Activated CD4-positive, alpha-beta memory T cell treated with anti-CD3 and anti-CD28 coated beads, Interleukin-2, amount 10 ng/mL, durations not matched to agents 7 days and 5 days (primary cell): ENCODE measurements at regions of chr3 and their contacts with region 1.

Region 1: GRCh38 chr3:184371570-184372018 is 6.4 kb downstream of the THPO start:
- DNase-seq: peak; percentile 73
- H3K4me3 Mint-ChIP-seq: no peak overlapping the region
- H3K27ac Mint-ChIP-seq: no peak overlapping the region
- H3K4me1 Mint-ChIP-seq: peaks cover 6% of the 10 kb centered on the region
- H3K27me3 Mint-ChIP-seq: peaks cover 18% of the 10 kb centered on the region

Region 2: DNA sequence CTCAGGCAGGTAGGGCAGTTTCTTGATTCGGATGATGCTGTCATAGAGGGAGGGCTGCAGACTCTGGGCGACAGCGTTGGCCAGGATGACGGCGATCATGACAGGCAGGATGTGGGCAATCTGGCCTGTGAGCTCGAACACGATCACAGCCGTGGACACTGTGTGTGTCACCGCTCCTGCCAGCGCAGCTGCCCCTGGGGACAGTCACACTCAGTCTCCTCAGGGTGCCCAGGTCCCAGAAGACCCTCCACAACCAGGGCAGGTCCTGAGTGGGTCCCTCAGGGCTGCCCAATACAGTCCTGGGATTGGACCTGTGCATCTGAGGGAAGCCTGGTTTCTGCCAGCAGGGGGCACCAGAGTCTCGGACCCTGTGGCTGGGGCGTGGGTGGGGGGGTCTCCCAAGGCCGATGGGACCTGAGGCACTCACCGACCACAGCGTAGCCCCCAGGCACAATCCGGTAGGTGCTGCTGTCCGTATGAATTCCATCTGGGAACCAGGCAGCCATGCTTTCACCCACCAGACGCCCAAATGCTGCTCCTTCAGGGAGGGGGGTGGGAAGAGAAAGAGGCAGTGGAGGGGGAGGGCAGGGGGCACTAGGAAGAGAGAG is 17.4 kb before region 1 on chr3:
- CTCF ChIA-PET with region 1: interaction called, 19 read pairs
- POLR2A ChIA-PET with region 1: no interaction called
- DNase-seq: peak; percentile 54
- H3K4me3 Mint-ChIP-seq: no peak overlapping the region
- H3K27ac Mint-ChIP-seq: no peak overlapping the region
- H3K4me1 Mint-ChIP-seq: peaks cover 5% of the 10 kb centered on the region
- H3K27me3 Mint-ChIP-seq: no peaks in the 10 kb centered on the region

Region 3: DNA sequence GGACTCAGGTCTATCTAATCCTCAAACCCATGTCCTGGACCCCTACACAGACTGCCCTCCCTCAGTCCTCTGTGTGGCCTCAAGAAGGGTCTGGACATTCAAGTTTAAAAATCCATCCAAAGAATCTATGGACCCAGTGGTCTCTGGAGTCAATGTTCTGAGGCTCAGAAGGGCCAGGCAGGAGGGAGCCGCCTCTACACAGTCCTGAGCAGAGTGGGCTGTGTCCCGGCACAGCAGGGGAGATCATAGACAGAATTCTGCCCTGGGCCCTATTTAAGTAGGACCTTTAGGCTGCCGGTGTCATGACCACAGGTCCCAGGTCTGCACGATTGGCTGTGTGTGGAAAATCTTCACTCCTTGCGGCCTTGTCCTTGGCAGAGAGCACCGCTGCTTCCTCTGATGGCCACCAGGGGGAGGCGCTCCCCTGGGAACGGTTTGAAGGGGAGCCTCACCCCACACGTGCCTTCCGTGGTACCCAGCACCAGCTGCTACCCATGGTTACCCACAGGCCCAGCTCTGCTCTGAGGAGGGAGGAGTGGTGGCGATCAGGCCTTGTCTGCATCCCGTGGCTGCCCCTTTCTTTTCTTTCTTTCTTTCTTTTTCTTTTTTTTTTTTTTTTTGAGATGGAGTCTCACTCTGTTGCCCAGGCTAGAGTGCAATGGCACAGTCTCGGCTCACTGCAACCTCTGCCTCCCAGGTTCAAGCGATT is 46.2 kb after region 1 on chr3:
- CTCF ChIA-PET with region 1: interaction called, 18 read pairs
- POLR2A ChIA-PET with region 1: no interaction called
- DNase-seq: peak; percentile 73
- H3K4me3 Mint-ChIP-seq: no peak overlapping the region
- H3K27ac Mint-ChIP-seq: no peak overlapping the region
- H3K4me1 Mint-ChIP-seq: peaks cover 2% of the 10 kb centered on the region
- H3K27me3 Mint-ChIP-seq: peaks cover 5% of the 10 kb centered on the region

Region 4: GRCh38 chr3:184469423-184469822 is 97.8 kb after region 1 on chr3:
- CTCF ChIA-PET with region 1: interaction called, 17 read pairs
- POLR2A ChIA-PET with region 1: no interaction called
- DNase-seq: peak; percentile 35
- H3K4me3 Mint-ChIP-seq: no peak overlapping the region
- H3K27ac Mint-ChIP-seq: no peak overlapping the region
- H3K4me1 Mint-ChIP-seq: peaks cover 10% of the 10 kb centered on the region
- H3K27me3 Mint-ChIP-seq: peaks cover 24% of the 10 kb centered on the region

Region 5: DNA sequence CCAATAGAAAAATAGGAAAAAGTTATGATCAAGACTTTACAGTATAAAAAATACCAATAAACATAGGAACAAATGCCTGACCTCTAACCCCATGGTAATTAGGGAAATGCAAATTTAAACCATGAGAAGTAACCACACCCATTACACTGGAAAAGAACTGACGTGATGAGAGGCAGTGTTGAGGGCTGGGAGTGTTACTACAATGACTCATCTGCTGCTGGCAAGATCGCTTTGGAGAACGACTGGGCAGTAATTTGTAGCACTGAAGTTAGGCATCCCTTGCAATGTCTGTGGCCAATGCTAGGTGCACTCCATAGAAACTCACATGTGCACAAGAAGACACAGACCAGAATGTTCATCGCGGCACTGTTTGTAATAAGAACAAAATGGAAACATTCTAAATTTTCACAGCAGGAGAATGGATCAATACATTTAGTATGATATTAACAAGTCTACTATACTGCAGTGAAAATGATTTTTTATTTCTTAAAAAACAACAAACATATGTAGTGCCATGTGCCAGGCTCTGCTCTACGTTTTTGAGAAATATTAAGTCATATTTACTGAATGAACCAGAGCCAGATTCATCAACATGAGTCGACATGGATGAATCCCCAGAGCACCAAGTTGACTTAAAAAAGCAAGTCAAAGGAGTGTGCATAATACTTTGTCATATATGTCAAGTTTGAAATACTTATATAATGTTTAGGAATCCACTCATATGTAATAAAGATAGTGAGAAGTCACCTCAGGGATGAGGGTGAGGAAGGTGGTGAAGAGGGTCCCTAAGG is 152.4 kb after region 1 on chr3:
- CTCF ChIA-PET with region 1: interaction called, 12 read pairs
- POLR2A ChIA-PET with region 1: no interaction called
- DNase-seq: peak; percentile 63
- H3K4me3 Mint-ChIP-seq: peak overlapping the region; percentile 47
- H3K27ac Mint-ChIP-seq: peak overlapping the region; percentile 81
- H3K4me1 Mint-ChIP-seq: peaks cover 26% of the 10 kb centered on the region
- H3K27me3 Mint-ChIP-seq: peaks cover 25% of the 10 kb centered on the region

Region 6: DNA sequence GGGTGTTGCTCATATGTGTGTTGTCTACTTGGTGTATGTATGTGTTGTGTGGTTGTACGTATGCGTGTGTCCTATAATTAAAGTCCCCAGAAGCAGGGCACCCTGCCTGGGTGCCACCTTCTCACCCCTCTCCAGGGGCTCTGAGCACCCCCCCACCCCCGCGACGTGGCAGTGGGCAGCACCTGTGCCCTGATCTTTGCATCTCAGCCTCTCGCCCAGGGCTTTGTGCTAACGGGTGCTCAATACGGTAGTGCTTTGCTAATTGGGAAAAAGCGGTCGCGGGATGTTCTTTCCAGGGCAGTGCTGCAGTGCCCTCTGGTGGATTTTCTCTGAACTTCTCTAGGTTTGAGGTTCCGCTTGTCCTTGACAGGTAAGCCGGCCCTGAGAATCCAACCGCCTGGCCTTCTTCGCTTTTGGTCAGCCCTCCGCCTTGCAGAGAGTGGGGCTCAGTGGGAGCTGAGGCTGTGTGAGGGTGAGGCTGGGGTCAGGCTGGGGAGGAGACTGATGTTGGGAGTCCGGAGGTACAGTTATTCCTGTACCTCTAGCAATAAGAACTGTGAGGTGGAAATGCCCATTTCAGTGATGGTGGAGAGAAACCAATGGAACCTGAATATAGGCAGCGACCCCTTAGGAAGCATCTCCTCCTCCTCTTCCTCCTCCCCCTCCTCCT is 172.4 kb after region 1 on chr3:
- CTCF ChIA-PET with region 1: interaction called, 123 read pairs
- POLR2A ChIA-PET with region 1: no interaction called
- DNase-seq: peak; percentile 81
- H3K4me3 Mint-ChIP-seq: no peak overlapping the region
- H3K27ac Mint-ChIP-seq: no peak overlapping the region
- H3K4me1 Mint-ChIP-seq: peaks cover 8% of the 10 kb centered on the region
- H3K27me3 Mint-ChIP-seq: peaks cover 22% of the 10 kb centered on the region

Region 7: GRCh38 chr3:184784731-184785500 is 413.3 kb after region 1 on chr3:
- CTCF ChIA-PET with region 1: no interaction called
- POLR2A ChIA-PET with region 1: no interaction called
- DNase-seq: no peak
- H3K4me3 Mint-ChIP-seq: no peak overlapping the region
- H3K27ac Mint-ChIP-seq: no peak overlapping the region
- H3K4me1 Mint-ChIP-seq: peaks cover 28% of the 10 kb centered on the region
- H3K27me3 Mint-ChIP-seq: peaks cover 8% of the 10 kb centered on the region